ENCODE measurements at regions of chr2 and their contacts with region 1.

Region 1: DNA sequence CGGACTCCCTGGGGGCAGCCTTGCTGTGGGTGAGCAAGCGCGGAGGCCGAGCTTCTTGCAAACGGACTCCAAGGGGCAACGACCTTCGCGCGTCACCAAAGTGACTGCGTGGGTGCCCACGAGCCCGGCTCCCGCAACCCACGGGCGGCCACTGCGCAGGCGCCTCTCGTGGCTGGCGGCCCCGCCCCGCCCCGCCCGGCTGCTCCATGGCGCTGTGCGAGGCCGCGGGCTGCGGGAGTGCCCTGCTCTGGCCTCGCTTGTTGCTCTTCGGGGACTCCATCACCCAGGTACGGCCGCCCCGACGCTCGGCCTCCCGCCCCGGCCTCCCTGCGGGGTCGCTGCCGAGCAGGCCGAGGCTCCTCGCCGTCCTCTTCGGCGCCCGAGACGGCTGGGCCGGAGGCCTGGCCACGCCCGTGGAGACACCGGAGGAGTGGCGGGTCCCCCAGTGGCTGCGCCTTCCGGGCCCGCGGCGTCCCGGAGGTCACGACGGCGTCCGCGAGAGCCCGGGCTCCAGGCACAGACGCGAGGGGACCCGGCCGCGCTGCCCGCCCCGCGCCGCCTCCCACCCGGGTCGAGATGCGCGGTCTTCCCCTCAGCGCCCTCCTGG is at the start of gene IAH1:
- DNase-seq: peak; percentile 61
- H3K4me3 ChIP-seq: peak within 1 kb of the TSS; percentile 99
- H3K27ac ChIP-seq: peak within 1 kb of the TSS; percentile 85
- H3K4me1 ChIP-seq: no peaks in the 10 kb centered on the region
- H3K27me3 ChIP-seq: no peaks in the 10 kb centered on the region
- CTCF ChIP-seq: no peak
- total RNA-seq, gene IAH1: 54.9 and 55.3 TPM in 2 replicates

Region 2: DNA sequence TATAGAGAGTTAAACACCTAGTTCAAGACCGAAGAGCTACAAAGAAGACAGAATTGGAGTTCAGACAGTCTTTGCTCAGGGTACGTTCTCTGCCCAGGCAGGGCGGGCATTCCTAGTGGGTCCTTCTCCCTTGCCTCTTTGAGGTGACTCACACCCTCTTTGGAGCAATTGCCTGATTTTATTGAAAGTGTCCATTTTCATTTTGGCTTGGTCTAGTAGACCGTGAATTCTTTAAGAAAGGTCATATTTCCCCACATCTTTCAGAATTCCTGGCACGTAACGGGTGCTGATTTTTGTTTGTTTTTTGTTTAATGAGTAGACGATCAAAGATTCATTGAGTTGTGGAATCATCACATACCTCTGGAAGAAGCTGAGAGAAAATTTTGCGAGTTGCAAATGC is 1685.7 kb before region 1 on chr2:
- CTCF ChIA-PET with region 1: no interaction called
- POLR2A ChIA-PET with region 1: no interaction called
- intact Hi-C with region 1: no loop called
- DNase-seq: no peak
- H3K4me3 ChIP-seq: no peak overlapping the region
- H3K27ac ChIP-seq: no peak overlapping the region
- H3K4me1 ChIP-seq: no peaks in the 10 kb centered on the region
- H3K27me3 ChIP-seq: no peaks in the 10 kb centered on the region
- CTCF ChIP-seq: no peak

Region 3: DNA sequence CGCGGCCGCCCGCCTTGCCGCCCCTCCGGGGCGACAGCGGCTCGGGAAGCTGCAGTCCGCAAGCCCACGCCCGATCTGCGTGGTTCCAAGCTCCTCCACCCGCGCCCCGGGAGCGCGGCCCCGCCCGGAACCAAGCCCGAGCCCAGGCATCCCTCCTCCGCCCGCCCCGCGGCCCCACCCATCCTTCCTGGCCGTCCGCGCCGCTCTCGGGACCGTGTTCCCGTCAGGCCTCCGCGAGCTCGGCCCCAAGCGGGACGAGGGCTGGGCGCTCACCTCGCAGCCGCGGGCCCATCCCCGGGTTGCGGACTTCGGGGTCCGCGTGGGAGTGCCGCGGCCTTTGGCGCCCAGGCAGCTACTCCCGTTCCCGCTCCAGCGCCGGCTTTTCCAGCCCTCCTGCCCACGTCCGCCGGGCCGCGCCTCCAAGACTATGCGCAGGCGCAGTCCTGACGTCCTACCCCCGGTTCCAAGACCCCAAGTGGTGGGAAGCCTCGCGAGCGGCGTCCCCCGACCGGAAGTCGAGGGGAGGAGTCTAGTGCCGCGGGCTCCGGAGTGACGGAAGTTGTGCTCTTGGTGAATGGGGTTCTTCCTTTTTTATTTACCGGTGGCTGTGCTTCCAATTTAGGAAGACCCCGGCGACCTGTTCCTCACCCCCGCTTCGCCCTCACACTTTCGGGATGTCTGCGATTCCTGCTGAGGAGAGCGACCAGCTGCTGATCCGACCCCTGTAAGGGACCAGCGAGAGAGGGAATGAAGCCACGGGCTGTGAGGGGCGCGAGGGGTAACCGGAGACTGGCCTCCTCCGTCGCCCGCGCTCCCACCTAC is 51.2 kb before region 1 on chr2 and contains the starts of genes CPSF3 and ITGB1BP1:
- CTCF ChIA-PET with region 1: no interaction called
- POLR2A ChIA-PET with region 1: no interaction called
- intact Hi-C with region 1: no loop called
- DNase-seq: peak; percentile 99
- H3K4me3 ChIP-seq: peak within 1 kb of the TSS; percentile 79
- H3K27ac ChIP-seq: peak within 1 kb of the TSS; percentile 83
- H3K4me1 ChIP-seq: peaks cover 15% of the 10 kb centered on the region
- H3K27me3 ChIP-seq: no peaks in the 10 kb centered on the region
- CTCF ChIP-seq: no peak
- total RNA-seq, gene CPSF3: 86.8 and 87.2 TPM in 2 replicates
- total RNA-seq, gene ITGB1BP1: 115 and 138 TPM in 2 replicates

Region 4: DNA sequence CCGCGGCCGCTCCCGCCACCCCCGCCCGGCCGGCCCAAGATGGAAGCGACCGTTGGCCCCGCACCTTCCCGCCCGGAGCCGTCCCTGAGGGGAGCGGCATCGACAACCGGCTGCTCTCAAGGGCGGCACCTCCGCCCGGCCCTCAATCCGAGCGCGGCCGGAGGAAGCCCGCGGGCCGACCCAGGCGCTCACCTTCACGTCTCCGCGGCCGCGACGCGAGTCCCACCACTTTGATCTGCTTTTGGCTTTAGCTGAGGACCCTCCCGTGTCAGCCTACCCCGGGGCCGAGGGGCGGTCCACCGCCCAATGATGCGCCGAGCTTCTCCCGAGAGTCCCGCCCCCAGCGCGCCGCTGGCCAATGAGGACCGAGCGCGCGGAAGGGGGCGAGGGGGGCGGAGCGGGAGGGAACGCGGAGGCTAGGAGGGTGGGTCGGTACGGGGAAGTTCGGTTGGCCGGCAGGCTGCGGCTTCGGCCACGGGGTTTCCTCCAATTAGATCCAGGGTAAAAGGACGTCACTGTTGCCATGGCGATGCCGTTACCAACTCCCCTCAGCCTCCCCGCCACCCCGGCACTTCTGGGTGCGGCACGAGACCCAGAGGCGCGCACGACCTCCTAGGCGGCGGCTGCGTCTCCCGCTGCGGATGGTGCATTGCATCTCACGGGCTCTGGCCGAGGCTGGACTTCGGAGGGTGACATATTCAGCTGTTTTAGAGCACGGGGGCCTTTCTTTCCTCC is 156.5 kb after region 1 on chr2 and contains the start of gene YWHAQ:
- CTCF ChIA-PET with region 1: no interaction called
- POLR2A ChIA-PET with region 1: interaction called, 11 read pairs
- intact Hi-C with region 1: no loop called
- DNase-seq: peak; percentile 99
- H3K4me3 ChIP-seq: peak within 1 kb of the TSS; percentile 79
- H3K27ac ChIP-seq: peak within 1 kb of the TSS; percentile 95
- H3K4me1 ChIP-seq: peaks cover 13% of the 10 kb centered on the region
- H3K27me3 ChIP-seq: no peaks in the 10 kb centered on the region
- CTCF ChIP-seq: no peak
- total RNA-seq, gene YWHAQ: 505 and 533 TPM in 2 replicates

Region 5: GRCh38 chr2:9663008-9663879 is 188.8 kb after region 1 on chr2:
- CTCF ChIA-PET with region 1: no interaction called
- POLR2A ChIA-PET with region 1: no interaction called
- intact Hi-C with region 1: no loop called
- DNase-seq: no peak
- H3K4me3 ChIP-seq: no peak overlapping the region
- H3K27ac ChIP-seq: no peak overlapping the region
- H3K4me1 ChIP-seq: no peaks in the 10 kb centered on the region
- H3K27me3 ChIP-seq: no peaks in the 10 kb centered on the region
- CTCF ChIP-seq: no peak

Region 6: GRCh38 chr2:9703085-9703641 is 228.7 kb after region 1 on chr2:
- CTCF ChIA-PET with region 1: no interaction called
- POLR2A ChIA-PET with region 1: no interaction called
- intact Hi-C with region 1: no loop called
- DNase-seq: peak; percentile 12
- H3K4me3 ChIP-seq: no peak overlapping the region
- H3K27ac ChIP-seq: no peak overlapping the region
- H3K4me1 ChIP-seq: no peaks in the 10 kb centered on the region
- H3K27me3 ChIP-seq: no peaks in the 10 kb centered on the region
- CTCF ChIP-seq: no peak

Measured in A673 (cell line).